Posterior cingulate gyrus (tissue), 11 donors: ENCODE measurements at regions of chr15 and their contacts with region 1.

Region 1: GRCh38 chr15:64095795-64096667 is at the start of gene SNX1:
- DNase-seq: peak; percentile 92 to 99 (median 96)

Region 2: DNA sequence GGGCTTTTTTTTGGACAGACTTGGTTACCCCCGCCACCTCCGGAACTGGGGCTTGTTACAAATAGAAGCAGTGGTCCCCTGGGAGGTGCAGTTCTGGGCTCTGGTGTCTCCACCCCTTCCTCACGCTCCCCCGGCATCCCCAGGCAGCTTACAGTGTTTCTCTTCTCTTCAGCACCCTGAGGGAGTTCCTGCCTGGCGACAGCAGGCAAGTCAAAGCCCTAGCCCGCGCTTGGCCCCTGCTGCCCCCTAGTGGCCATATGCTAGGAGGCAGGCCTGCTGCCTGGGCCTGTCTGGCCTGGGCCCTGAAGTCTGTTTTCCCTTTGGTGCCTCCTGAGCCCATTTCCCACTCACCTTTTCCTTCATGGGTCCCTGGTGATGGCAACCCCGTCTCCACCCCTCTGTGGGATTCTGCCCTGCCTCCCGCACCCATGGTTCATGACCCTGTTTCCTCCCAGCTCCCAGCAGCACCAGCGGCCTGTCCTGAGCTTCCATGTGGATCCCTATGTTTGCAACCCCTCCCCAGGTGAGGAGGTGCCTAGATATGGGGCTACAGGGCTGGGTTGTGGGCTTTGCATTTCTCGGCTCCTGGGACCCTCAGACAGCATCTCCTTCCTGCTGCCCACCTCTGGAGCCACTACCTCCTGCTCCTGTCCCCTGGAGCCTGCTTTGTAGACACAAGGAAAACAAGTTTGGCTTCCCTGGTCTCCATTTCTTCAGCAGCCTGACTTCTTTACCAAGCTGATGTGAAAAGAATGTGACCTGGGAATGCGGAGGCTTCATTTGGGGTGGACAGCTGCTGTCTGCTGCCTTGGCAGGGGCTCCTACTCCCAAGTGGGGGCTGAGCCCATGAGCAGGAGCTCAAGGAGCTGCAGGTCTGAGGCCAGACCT is 57.7 kb after region 1 on chr15:
- intact Hi-C with region 1: loop called (anchors 5 kb)
- DNase-seq: peak; percentile 90 to 99 (median 96)